B cell (primary cell): ENCODE measurements at regions of chr6 and their contacts with region 1.

Region 1: GRCh38 chr6:78867370-78868040 is at the start of gene IRAK1BP1:
- DNase-seq: peak; percentile 91
- ATAC-seq: peak; percentile 94
- H3K4me3 ChIP-seq: peak within 1 kb of the TSS; percentile 58 to 94 (median 92)
- H3K4me3 Mint-ChIP-seq: peak within 1 kb of the TSS; percentile 98
- H3K27ac ChIP-seq: peak within 1 kb of the TSS; percentile 69 to 91
- H3K27ac Mint-ChIP-seq: peak within 1 kb of the TSS; percentile 97
- H3K4me1 ChIP-seq: peaks cover 9 to 13% of the 10 kb centered on the region in 2 donors
- H3K4me1 Mint-ChIP-seq: peaks cover 23% of the 10 kb centered on the region
- H3K27me3 ChIP-seq: no peaks in the 10 kb centered on the region
- H3K27me3 Mint-ChIP-seq: no peaks in the 10 kb centered on the region
- CTCF ChIP-seq: peak; percentile 18
- total RNA-seq, gene IRAK1BP1: 3.0 and 3.2 TPM in 2 replicates

Region 2: DNA sequence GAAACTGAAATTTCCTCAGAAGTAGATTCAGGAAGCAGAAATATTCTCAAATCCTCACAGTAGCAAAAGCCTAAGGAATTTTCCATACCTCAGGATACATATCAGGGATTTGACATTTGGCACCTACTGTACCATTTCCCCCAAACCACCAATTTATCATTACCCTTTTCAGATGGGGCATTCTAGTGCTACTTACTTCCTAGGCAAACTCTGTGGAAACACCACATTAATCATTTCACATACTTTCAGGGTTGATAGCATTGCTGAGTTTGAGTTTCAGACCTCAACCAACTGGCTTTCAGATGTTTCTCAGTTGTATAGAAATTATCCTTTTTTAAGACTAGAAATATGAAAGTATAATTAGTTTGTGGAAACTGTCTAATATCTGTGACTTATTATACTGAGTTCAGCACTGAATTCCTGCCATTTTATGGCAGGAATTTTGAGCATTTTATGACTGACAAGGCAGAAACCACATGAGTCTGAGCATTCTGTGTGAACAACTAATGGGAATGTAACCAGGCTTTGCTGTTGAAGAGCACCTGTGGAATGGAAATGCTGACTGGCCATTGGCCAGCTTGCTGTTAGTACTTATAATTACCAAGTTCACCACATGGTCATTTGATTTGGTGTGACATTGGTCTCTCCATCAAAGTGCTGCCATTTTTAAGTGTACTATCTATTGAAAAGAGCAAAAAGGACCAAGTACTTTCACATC is 35.3 kb before region 1 on chr6:
- CTCF ChIA-PET with region 1: no interaction called
- POLR2A ChIA-PET with region 1: no interaction called
- intact Hi-C with region 1: no loop called
- DNase-seq: no peak
- ATAC-seq: no peak
- H3K4me3 ChIP-seq: no peak overlapping the region
- H3K4me3 Mint-ChIP-seq: no peak overlapping the region
- H3K27ac ChIP-seq: no peak overlapping the region
- H3K27ac Mint-ChIP-seq: no peak overlapping the region
- H3K4me1 ChIP-seq: no peaks in the 10 kb centered on the region
- H3K4me1 Mint-ChIP-seq: no peaks in the 10 kb centered on the region
- H3K27me3 ChIP-seq: peaks cover 0 to 5% (median under 1%) of the 10 kb centered on the region in 4 experiments
- H3K27me3 Mint-ChIP-seq: peaks cover 20% of the 10 kb centered on the region
- CTCF ChIP-seq: no peak

Region 3: DNA sequence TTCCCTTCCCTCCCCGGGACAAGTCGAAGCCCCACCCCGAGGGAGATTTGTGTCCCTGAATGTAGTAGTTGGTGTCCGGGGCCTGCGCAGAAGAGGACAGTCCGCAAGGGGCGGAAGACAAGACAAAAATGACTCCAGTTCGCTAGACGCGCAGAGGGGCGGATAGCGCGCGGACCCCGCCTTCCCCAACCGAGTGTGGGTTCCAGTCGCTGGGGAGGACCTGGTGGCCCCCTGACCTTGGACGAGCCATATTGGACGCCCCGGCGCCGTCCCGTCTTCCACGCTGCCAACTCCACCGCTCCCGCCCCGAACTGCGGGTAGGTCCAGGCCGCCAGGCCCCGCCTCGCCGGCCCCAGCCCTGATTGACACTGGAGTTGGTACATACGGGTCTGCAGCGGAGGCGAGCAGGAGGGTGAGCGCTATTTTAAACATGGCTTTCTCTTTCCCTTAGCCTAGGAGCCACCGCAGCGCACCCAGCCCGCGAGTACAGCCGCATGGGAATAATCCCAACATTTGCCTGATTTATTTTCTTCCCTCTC is 366.2 kb after region 1 on chr6:
- CTCF ChIA-PET with region 1: no interaction called
- POLR2A ChIA-PET with region 1: no interaction called
- intact Hi-C with region 1: loop called (anchors 2 kb)
- DNase-seq: peak; percentile 75
- ATAC-seq: peak; percentile 35
- H3K4me3 ChIP-seq: peak overlapping the region; percentile 87 to 97 (median 93)
- H3K4me3 Mint-ChIP-seq: peak overlapping the region; percentile 95
- H3K27ac ChIP-seq: peak overlapping the region; percentile 52 to 66
- H3K27ac Mint-ChIP-seq: peak overlapping the region; percentile 90
- H3K4me1 ChIP-seq: peaks cover 5 to 7% of the 10 kb centered on the region in 2 donors
- H3K4me1 Mint-ChIP-seq: peaks cover 19% of the 10 kb centered on the region
- H3K27me3 ChIP-seq: no peaks in the 10 kb centered on the region
- H3K27me3 Mint-ChIP-seq: no peaks in the 10 kb centered on the region
- CTCF ChIP-seq: peak; percentile 27

Region 4: GRCh38 chr6:79536954-79537747 is 669.6 kb after region 1 on chr6 and contains the start of gene LCA5:
- CTCF ChIA-PET with region 1: no interaction called
- POLR2A ChIA-PET with region 1: no interaction called
- intact Hi-C with region 1: loop called (anchors 10 kb)
- DNase-seq: peak; percentile 92
- ATAC-seq: peak; percentile 97
- H3K4me3 ChIP-seq: peak within 1 kb of the TSS; percentile 63 to 92 (median 81)
- H3K4me3 Mint-ChIP-seq: no peak within 1 kb of the TSS
- H3K27ac ChIP-seq: peak within 1 kb of the TSS; percentile 31 to 59
- H3K27ac Mint-ChIP-seq: no peak within 1 kb of the TSS
- H3K4me1 ChIP-seq: peaks cover 12 to 15% of the 10 kb centered on the region in 2 donors
- H3K4me1 Mint-ChIP-seq: no peaks in the 10 kb centered on the region
- H3K27me3 ChIP-seq: peaks cover 0 to 5% (median 0%) of the 10 kb centered on the region in 4 experiments
- H3K27me3 Mint-ChIP-seq: peaks cover 9% of the 10 kb centered on the region
- CTCF ChIP-seq: no peak
- total RNA-seq, gene LCA5: 0.91 and 0.92 TPM in 2 replicates

Region 5: GRCh38 chr6:80106418-80107235 is 1239.1 kb after region 1 on chr6 and contains the start of gene BCKDHB:
- CTCF ChIA-PET with region 1: no interaction called
- POLR2A ChIA-PET with region 1: no interaction called
- intact Hi-C with region 1: loop called (anchors 10 kb)
- DNase-seq: peak; percentile 99
- ATAC-seq: peak; percentile 98
- H3K4me3 ChIP-seq: peak within 1 kb of the TSS; percentile 52 to 93 (median 83)
- H3K4me3 Mint-ChIP-seq: peak within 1 kb of the TSS; percentile 93
- H3K27ac ChIP-seq: peak within 1 kb of the TSS in 1 of 2 donors; percentile 67
- H3K27ac Mint-ChIP-seq: peak within 1 kb of the TSS; percentile 91
- H3K4me1 ChIP-seq: peaks cover 4 to 12% of the 10 kb centered on the region in 2 donors
- H3K4me1 Mint-ChIP-seq: peaks cover 13% of the 10 kb centered on the region
- H3K27me3 ChIP-seq: peaks cover 0 to 19% (median 5%) of the 10 kb centered on the region in 4 experiments
- H3K27me3 Mint-ChIP-seq: peaks cover 11% of the 10 kb centered on the region
- CTCF ChIP-seq: no peak
- total RNA-seq, gene BCKDHB: 20.1 and 21.4 TPM in 2 replicates